ENCODE measurements at regions of chr11 and their contacts with region 1.

Region 1: GRCh38 chr11:63838678-63839507 is at the start of gene MARK2:
- DNase-seq: peak; percentile 99
- H3K4me3 ChIP-seq: peak within 1 kb of the TSS; percentile 90 to 97 (median 94)
- H3K27ac ChIP-seq: peak within 1 kb of the TSS; percentile 86 to 97 (median 91)
- H3K4me1 ChIP-seq: peaks cover 48 to 59% (median 54%) of the 10 kb centered on the region in 4 donors
- H3K27me3 ChIP-seq: no peaks in the 10 kb centered on the region
- CTCF ChIP-seq: no peak
- EP300 ChIP-seq: no peak
- POLR2A ChIP-seq: no peak
- total RNA-seq, gene MARK2: 13.8 to 128 (median 34.8) TPM

Region 2: GRCh38 chr11:63879598-63880402 is 40.9 kb after region 1 on chr11:
- intact Hi-C with region 1: loop called (anchors 5 kb)
- DNase-seq: no peak
- H3K4me3 ChIP-seq: no peak overlapping the region
- H3K27ac ChIP-seq: peak overlapping the region in 3 of 5 donors; percentile 10 to 23 (median 19)
- H3K4me1 ChIP-seq: peaks cover 26 to 89% (median 67%) of the 10 kb centered on the region in 4 donors
- H3K27me3 ChIP-seq: no peaks in the 10 kb centered on the region
- CTCF ChIP-seq: no peak
- EP300 ChIP-seq: no peak
- POLR2A ChIP-seq: no peak

Region 3: DNA sequence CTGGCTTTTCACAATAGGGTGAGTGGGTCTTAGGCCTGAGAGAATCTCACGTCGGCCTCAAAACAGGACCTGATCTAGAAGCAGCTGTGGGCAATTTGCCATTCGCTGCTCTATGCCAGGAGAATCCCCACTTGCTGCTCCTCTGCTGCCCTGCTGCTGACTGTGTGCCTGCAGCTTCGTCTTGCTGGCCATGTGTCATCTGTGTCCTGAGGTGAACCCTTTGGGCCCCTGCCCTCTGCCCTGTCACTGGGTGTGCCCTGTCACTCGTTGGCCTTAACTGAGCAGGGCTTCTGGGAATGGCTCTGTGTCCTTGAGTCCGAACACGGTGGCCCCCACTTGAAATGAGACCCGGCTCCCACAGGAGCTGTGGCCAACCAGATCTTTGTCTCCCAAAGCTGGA is 106.1 kb after region 1 on chr11:
- intact Hi-C with region 1: loop called (anchors 5 kb)
- DNase-seq: peak in 1 of 2 donors; percentile 48
- H3K4me3 ChIP-seq: no peak overlapping the region
- H3K27ac ChIP-seq: peak overlapping the region in 4 of 5 donors; percentile 49 to 70 (median 55)
- H3K4me1 ChIP-seq: peaks cover 9 to 39% (median 20%) of the 10 kb centered on the region in 4 donors
- H3K27me3 ChIP-seq: no peaks in the 10 kb centered on the region
- CTCF ChIP-seq: no peak
- EP300 ChIP-seq: no peak
- POLR2A ChIP-seq: no peak